HepG2 (cell line): ENCODE measurements at regions of chr3 and their contacts with region 1.

Region 1: GRCh38 chr3:115836944-115837343 is 213.6 kb downstream of the GAP43 start:
- DNase-seq: no peak
- ATAC-seq: no peak
- H3K4me3 ChIP-seq: no peak overlapping the region
- H3K27ac ChIP-seq: no peak overlapping the region
- H3K4me1 ChIP-seq: peaks cover 7% of the 10 kb centered on the region
- H3K27me3 ChIP-seq: no peaks in the 10 kb centered on the region; a peak in 1 of 5 replicates
- CTCF ChIP-seq: peak; percentile 23; the same call in 1 of the 2 replicates
- EP300 ChIP-seq: no peak
- POLR2A ChIP-seq: no peak
- RAD21 ChIP-seq: no peak

Region 2: DNA sequence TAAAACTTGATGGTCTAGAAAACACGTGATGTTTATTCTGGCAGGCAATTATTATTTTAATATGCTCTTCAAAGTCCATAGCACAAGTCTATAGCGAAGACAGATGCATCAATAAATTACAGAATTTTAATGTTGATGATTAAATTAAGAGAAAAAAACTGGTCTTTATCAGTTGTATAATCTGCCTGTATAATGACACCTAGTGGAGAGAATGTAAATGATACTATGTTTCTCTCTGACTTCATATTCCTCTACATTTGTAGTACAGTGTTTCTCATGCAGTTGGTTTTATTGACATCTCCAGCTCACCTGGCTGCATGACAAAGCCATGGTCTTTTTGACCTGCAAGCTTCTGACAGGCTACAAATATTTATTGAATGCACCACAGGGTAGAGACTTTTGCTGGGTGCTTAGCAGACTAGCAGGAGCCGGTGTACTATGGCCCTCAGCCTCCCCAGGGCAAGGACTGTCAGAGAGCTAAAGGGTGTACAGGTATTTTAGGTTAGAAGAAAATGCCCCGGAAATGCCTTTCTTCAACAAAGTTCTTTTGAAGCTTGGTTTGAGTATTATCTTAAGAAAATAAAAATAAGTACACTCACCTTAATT is 76.2 kb after region 1 on chr3:
- CTCF ChIA-PET with region 1: no interaction called
- POLR2A ChIA-PET with region 1: no interaction called
- in situ Hi-C with region 1: no loop called
- intact Hi-C with region 1: loop called (anchors 5 kb)
- DNase-seq: peak; percentile 13
- ATAC-seq: peak; percentile 74
- H3K4me3 ChIP-seq: no peak overlapping the region
- H3K27ac ChIP-seq: no peak overlapping the region
- H3K4me1 ChIP-seq: no peaks in the 10 kb centered on the region
- H3K27me3 ChIP-seq: no peaks in the 10 kb centered on the region
- CTCF ChIP-seq: peak; percentile 26; the same call in 1 of the 2 replicates
- EP300 ChIP-seq: no peak
- POLR2A ChIP-seq: no peak
- RAD21 ChIP-seq: no peak